SK-N-SH (cell line): ENCODE measurements at regions of chr6 and their contacts with region 1.

Region 1: DNA sequence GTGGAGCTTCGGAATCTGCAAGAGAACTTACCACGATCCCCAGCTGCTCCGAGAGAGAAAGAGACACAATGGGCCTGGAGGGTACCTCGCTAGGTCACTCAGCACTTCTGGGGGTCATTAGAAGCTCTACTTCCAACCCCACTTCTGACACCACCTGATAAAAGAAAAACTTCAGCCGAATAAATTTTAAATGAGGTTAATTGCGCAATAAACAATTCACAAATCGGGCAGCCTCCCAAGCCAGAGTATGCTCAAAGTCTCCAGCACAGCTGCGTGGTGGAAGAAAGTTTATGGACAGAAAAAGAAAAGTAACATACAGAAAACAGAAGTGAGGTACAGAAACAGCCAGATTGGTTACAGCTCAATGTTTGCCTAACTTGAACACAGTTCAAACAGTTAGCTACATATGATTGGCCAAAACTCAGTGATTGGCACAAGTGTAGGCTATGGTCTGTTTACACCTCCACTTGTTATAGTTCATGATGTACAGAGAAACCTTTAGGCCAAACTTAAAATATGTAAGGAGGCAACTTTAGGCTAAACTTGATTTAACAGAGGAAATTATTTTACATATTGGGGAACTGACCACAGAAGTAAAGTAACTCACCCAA is 52.6 kb downstream of the COL11A2 start:
- DNase-seq: no peak
- H3K4me3 ChIP-seq: no peak overlapping the region
- H3K27ac ChIP-seq: no peak overlapping the region
- H3K4me1 ChIP-seq: no peaks in the 10 kb centered on the region
- H3K27me3 ChIP-seq: peaks cover 75% of the 10 kb centered on the region
- CTCF ChIP-seq: no peak
- EP300 ChIP-seq: no peak
- RAD21 ChIP-seq: no peak

Region 2: DNA sequence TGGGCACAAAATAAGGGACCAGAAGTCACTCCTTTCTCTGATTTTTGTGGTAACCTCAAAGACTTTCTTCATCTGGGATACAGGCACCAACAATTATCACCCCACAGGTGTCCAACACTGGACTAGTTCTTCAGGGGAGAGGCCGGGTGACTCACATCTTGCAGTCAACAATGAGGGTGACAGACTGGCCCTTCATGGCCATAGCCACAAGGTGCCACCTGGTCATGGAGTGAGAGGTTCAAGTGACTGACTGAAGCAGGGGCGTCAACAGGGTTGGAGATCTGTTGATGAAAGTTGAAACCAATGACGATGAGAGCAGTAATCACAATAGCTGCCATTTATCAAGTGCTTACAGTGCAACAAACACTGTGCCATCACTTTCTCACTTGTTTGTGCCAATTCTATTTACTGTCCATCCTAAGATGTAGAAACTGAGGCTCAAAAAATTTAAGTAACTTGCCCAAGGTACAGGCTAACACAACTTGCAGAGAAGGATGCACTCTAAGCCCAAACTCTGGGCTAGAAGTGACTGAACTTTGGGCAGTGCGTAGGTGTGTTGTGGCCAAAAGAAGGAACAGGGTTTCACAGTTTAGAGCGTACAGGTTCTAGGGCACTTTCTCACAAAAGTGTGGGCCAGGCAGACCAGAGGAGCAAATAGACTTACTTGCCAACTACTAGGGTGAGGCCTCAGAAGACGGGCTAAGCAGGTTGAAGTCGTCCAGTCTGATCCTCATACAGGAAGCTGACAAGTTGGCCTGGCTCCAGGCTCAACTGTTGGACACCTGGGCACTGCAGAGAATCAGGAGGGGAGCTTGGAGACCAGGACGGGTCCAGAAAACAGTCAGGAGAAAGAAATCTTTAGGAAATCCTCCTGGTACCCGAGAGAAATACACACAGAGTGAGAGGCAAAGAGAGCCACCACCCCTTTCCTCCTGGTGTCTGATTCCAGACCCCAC is 33.5 kb before region 1 on chr6:
- CTCF ChIA-PET with region 1: no interaction called
- POLR2A ChIA-PET with region 1: no interaction called
- DNase-seq: no peak
- H3K4me3 ChIP-seq: no peak overlapping the region
- H3K27ac ChIP-seq: no peak overlapping the region
- H3K4me1 ChIP-seq: no peaks in the 10 kb centered on the region
- H3K27me3 ChIP-seq: peaks cover 24% of the 10 kb centered on the region; the same call in 1 of the 2 replicates
- CTCF ChIP-seq: no peak
- EP300 ChIP-seq: no peak
- RAD21 ChIP-seq: no peak

Region 3: DNA sequence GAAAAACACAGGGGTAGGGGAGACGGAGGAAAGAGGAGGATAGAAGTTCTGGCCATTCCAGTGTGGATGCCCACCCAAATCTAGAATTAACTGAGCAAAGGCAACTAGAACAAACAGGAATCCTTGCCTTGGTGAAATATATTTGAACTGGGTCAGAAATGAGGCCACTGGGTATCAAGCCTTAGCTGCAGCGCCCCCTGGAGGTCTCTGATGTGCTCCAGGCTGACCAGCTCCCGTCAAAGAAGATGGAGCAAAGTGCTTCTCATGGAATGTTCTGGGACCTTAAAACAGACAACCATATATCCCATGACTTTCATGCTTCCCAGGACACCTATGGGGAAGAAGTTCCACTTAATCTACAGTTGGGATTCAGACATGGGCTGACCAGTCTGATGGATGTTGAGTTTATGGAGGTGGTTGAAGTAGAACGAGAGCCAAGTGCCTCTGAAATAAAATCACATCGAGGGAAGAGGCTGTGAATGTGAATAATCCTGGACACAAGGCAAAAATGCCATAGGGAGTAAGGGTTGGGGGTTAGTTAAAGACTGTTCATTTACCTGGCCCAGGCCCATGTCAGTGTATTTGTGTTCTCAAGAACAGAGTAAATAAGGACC is 13.5 kb before region 1 on chr6:
- CTCF ChIA-PET with region 1: interaction called, 27 read pairs
- POLR2A ChIA-PET with region 1: no interaction called
- DNase-seq: peak; percentile 51
- H3K4me3 ChIP-seq: no peak overlapping the region; a peak in 1 of 4 replicates
- H3K27ac ChIP-seq: no peak overlapping the region
- H3K4me1 ChIP-seq: no peaks in the 10 kb centered on the region
- H3K27me3 ChIP-seq: peaks cover 39% of the 10 kb centered on the region; the same call in 1 of the 2 replicates
- CTCF ChIP-seq: peak; percentile 56
- EP300 ChIP-seq: no peak
- RAD21 ChIP-seq: no peak